H1 (cell line): ENCODE measurements at regions of chr2 and their contacts with region 1.

Region 1: GRCh38 chr2:162221064-162221463 is 22.2 kb downstream of the FAP start:
- DNase-seq: peak; percentile 73 to 91
- H3K4me3 ChIP-seq: no peak overlapping the region
- H3K27ac ChIP-seq: no peak overlapping the region
- H3K4me1 ChIP-seq: no peaks in the 10 kb centered on the region
- H3K27me3 ChIP-seq: no peaks in the 10 kb centered on the region
- CTCF ChIP-seq: peak; percentile 88 to 96 (median 89)
- EP300 ChIP-seq: no peak
- POLR2A ChIP-seq: no peak
- RAD21 ChIP-seq: peak; percentile 84 to 87

Region 2: DNA sequence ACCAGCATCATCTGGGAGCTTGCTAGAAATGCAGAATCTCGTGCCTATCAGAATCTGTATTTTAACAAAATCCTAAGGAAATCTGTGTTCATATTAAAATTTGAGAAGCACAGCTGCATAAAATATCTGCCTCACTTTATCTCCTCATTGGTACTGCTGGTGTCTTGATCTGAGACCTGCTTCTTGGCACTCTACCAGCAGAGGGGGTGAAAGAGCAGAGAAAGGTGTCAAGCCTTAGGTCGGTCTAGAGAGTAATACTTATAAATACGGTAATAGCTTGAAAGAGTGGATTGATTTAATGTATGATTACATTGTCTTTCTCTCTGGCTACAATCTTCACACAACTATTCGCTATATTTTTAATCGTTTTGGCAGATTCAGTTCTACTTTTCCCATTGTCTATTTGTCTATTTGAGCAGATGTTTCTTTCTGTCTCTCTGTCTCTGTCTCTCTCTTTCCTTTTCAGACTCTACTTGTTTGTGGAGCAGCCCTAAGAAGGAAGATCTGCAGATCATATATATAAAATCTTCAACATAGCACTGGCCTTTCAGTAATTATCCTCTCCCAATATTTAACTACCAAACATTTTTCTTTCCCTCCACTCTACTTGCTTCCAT is 67.3 kb before region 1 on chr2:
- CTCF ChIA-PET with region 1: interaction called, 43 read pairs
- POLR2A ChIA-PET with region 1: no interaction called
- DNase-seq: peak; percentile 27 to 72
- H3K4me3 ChIP-seq: no peak overlapping the region
- H3K27ac ChIP-seq: no peak overlapping the region
- H3K4me1 ChIP-seq: peaks cover 0 to 3% (median 0%) of the 10 kb centered on the region in 4 experiments; a peak in 1 of 7 replicates
- H3K27me3 ChIP-seq: no peaks in the 10 kb centered on the region
- CTCF ChIP-seq: peak; percentile 11 to 80 (median 74)
- EP300 ChIP-seq: no peak
- POLR2A ChIP-seq: no peak
- RAD21 ChIP-seq: peak; percentile 74 to 81

Region 3: GRCh38 chr2:162182395-162182794 is 38.7 kb before region 1 on chr2:
- CTCF ChIA-PET with region 1: interaction called, 13 read pairs
- POLR2A ChIA-PET with region 1: no interaction called
- DNase-seq: no peak
- H3K4me3 ChIP-seq: no peak overlapping the region
- H3K27ac ChIP-seq: no peak overlapping the region
- H3K4me1 ChIP-seq: no peaks in the 10 kb centered on the region
- H3K27me3 ChIP-seq: peaks cover 0 to 1% (median 0%) of the 10 kb centered on the region in 4 experiments; a peak in 1 of 7 replicates
- CTCF ChIP-seq: no peak
- EP300 ChIP-seq: no peak
- POLR2A ChIP-seq: no peak
- RAD21 ChIP-seq: no peak

Region 4: GRCh38 chr2:162232671-162233070 is 11.6 kb after region 1 on chr2:
- CTCF ChIA-PET with region 1: interaction called, 15 read pairs
- POLR2A ChIA-PET with region 1: no interaction called
- DNase-seq: no peak
- H3K4me3 ChIP-seq: no peak overlapping the region
- H3K27ac ChIP-seq: no peak overlapping the region
- H3K4me1 ChIP-seq: no peaks in the 10 kb centered on the region
- H3K27me3 ChIP-seq: no peaks in the 10 kb centered on the region
- CTCF ChIP-seq: no peak
- EP300 ChIP-seq: no peak
- POLR2A ChIP-seq: no peak
- RAD21 ChIP-seq: no peak

Region 5: DNA sequence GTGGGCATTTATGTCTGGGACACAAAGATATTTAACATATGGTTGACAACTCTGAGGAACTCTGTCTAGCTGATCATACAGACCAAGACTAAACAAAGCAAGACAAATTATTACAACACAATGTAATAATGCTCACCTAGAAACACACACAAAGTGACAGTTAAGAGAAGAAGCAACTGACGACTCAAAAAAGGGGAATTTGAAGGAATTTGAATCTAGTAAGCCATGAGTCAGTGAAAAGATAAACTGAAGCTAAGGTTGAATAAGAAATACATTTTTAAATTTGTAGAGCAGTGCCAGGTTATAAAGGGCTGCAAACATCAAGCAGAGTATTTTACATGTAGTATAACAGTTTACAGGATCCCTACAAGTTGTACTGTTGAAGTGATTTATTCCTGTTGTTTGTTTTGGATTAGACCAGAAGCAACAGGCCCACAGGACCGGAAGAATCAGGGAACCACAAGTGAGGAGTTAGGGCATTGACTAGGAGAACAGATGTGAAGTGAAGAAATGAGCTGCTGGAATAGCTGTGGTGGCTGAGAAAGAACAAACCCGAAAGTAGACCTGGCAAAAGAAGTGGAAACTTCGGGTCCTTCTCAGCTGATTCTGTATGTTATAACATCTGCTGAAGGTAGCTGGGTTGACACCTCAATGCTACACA is 61.8 kb after region 1 on chr2:
- CTCF ChIA-PET with region 1: interaction called, 19 read pairs
- POLR2A ChIA-PET with region 1: no interaction called
- DNase-seq: no peak
- H3K4me3 ChIP-seq: no peak overlapping the region
- H3K27ac ChIP-seq: no peak overlapping the region
- H3K4me1 ChIP-seq: no peaks in the 10 kb centered on the region
- H3K27me3 ChIP-seq: no peaks in the 10 kb centered on the region
- CTCF ChIP-seq: no peak
- EP300 ChIP-seq: no peak
- POLR2A ChIP-seq: no peak
- RAD21 ChIP-seq: no peak

Region 6: DNA sequence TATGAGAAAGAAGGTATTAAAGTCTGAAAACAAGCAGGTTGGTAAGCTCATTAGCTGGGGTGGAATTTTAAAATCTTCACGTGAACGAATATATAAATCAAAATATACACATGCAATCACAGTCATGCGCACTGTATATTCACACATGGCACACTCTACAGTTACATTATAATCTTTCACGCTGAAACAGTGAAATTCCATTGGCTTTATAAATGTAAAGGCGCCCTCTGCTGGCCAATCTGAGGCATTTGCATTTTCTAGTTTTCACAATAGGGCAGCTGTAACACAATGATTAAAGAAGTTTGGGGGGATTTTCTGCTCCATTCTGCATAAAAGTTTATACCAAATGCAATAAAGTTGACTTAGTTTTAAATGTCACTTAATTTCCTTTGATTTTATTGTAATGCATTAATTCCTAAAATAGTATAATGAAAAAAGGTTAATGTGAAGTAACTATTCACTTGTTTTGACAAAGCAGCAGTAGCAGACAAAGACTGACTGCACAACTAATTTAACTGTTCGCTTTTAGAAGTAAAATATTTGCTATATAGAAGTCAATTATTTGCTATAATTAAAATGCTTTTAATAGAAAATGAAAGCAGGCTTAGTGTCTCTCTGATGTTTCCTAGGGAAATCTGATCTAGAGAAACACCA is 80.2 kb after region 1 on chr2:
- CTCF ChIA-PET with region 1: interaction called, 188 read pairs
- POLR2A ChIA-PET with region 1: no interaction called
- DNase-seq: no peak
- H3K4me3 ChIP-seq: no peak overlapping the region
- H3K27ac ChIP-seq: no peak overlapping the region
- H3K4me1 ChIP-seq: no peaks in the 10 kb centered on the region
- H3K27me3 ChIP-seq: no peaks in the 10 kb centered on the region
- CTCF ChIP-seq: peak in 2 of 3 experiments; percentile 62 to 72; a peak in 3 of 4 replicates
- EP300 ChIP-seq: no peak
- POLR2A ChIP-seq: no peak
- RAD21 ChIP-seq: peak; percentile 59 to 63